Activated CD4-positive, alpha-beta T cell treated with anti-CD3 and anti-CD28 coated beads, Interleukin-2, amount 10 ng/mL, durations not matched to agents 24 days and 14 days (primary cell): ENCODE measurements at regions of chr17 and their contacts with region 1.

Region 1: DNA sequence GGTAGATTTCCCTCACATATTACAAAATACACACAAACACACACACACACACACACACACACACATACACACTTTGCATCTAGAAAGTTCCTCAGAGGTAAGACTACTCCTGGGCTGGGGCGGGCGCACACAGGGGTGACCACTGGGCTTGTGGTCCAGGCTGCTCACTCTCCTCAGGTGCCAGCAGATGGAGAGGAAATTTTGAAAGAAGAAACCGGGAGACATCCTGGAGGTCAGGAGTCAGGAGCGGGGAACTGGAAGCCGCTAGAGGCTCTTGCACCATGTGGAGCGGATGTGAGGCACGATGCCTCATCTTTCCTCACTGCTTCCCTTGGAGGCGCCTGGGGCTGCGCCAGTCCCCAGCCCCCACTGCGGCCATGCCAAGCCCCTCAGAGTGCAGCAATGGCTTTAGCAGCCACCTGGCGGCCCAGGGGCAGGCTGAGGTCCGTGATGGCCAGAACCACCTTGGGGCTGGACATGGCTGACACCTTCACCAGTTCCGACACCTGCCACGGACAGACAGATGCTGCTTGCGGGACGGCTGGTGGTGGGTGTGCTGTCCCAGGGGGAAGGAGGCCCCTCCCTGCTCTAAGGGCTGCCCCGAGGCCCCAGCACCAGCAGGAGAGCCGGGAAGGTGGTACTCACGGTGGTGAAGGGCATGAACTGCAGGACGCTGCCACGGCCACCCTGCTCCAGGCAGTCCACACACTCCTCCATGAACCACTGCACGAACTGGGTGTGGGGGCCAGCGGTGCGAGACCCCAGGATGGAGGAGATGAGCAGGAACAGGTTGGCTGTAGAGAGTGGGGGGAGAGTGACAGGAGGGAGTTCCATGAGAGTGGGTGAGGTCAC is 4.1 kb downstream of the CSF3 start:
- DNase-seq: no peak
- H3K4me3 Mint-ChIP-seq: no peak overlapping the region
- H3K27ac Mint-ChIP-seq: no peak overlapping the region
- H3K4me1 Mint-ChIP-seq: peaks cover 1% of the 10 kb centered on the region
- H3K27me3 Mint-ChIP-seq: no peaks in the 10 kb centered on the region

Region 2: DNA sequence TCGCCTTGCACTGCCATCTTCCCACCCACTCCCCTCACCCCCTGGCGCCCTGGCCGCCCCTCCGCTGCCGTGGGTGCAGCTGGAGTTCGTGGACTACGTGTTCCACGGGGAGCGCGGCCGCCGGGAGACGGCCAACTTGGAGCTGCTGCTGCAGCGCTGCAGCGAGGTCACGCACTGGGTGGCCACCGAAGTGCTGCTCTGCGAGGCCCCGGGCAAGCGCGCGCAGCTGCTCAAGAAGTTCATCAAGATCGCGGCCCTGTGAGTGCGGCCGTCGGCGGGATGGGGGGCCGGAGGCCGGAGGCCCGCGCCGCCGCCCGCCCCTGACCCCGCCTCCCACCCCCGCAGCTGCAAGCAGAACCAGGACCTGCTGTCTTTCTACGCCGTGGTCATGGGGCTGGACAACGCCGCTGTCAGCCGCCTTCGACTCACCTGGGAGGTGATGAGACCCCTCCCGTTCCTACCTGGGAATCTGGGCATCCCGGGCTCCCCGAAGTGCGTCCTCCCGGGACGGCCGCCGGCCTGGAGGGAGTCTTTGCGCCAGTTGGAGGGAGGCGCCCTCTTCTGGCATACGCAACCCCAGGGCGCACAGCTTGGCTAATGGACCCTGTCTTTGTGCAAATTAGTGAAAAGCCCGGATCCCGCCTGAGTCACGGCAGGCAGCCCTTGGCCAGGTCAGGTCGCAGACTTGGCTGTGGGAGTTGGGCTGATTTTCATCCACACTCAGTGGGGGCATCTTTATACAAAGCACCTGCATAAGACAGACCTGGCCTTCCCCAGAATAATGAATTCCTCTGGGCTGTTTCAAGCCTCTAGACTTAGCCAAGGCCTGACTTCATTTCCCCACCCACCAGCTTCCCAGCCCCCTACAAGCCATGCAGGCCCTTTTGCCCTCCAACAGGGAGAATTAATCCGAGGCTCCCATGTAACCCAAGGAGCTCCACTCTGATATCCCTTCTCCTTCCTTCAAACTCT is 172.2 kb after region 1 on chr17:
- intact Hi-C with region 1: loop called (anchors 10 kb)
- DNase-seq: peak; percentile 91
- H3K4me3 Mint-ChIP-seq: peak overlapping the region; percentile 85
- H3K27ac Mint-ChIP-seq: peak overlapping the region; percentile 76
- H3K4me1 Mint-ChIP-seq: peaks cover 11% of the 10 kb centered on the region
- H3K27me3 Mint-ChIP-seq: peaks cover 6% of the 10 kb centered on the region